ENCODE measurements at regions of chr17 and their contacts with region 1.

Region 1: GRCh38 chr17:7204828-7205461 is 14.7 kb downstream of the DLG4 start:
- DNase-seq: peak; percentile 90 to 99 (median 97)
- ATAC-seq: peak; percentile 90
- H3K4me3 ChIP-seq: peak overlapping the region; percentile 77
- H3K4me3 Mint-ChIP-seq: peak overlapping the region; percentile 67 to 94 (median 85)
- H3K27ac ChIP-seq: peak overlapping the region; percentile 91
- H3K27ac Mint-ChIP-seq: peak overlapping the region; percentile 88 to 99 (median 95)
- H3K4me1 ChIP-seq: peaks cover 15 to 17% of the 10 kb centered on the region in 2 donors
- H3K4me1 Mint-ChIP-seq: peaks cover 28 to 39% (median 32%) of the 10 kb centered on the region in 7 donors
- H3K27me3 ChIP-seq: no peaks in the 10 kb centered on the region
- H3K27me3 Mint-ChIP-seq: no peaks in the 10 kb centered on the region

Region 2: GRCh38 chr17:6995431-6996255 is 209.3 kb before region 1 on chr17 and contains the start of gene ALOX12:
- CTCF ChIA-PET with region 1: no interaction called
- POLR2A ChIA-PET with region 1: no interaction called
- intact Hi-C with region 1: no loop called
- DNase-seq: no peak
- ATAC-seq: peak; percentile 20
- H3K4me3 ChIP-seq: no peak within 1 kb of the TSS
- H3K4me3 Mint-ChIP-seq: peak within 1 kb of the TSS in 1 of 10 donors; percentile 47
- H3K27ac ChIP-seq: no peak within 1 kb of the TSS
- H3K27ac Mint-ChIP-seq: peak within 1 kb of the TSS in 2 of 9 donors; percentile 19 to 25
- H3K4me1 ChIP-seq: no peaks in the 10 kb centered on the region
- H3K4me1 Mint-ChIP-seq: peaks cover 0 to 12% (median 5%) of the 10 kb centered on the region in 7 donors
- H3K27me3 ChIP-seq: no peaks in the 10 kb centered on the region
- H3K27me3 Mint-ChIP-seq: no peaks in the 10 kb centered on the region
- total RNA-seq, gene ALOX12: 1.0 TPM in 1 of 5 experiments, not detected in the others

Region 3: GRCh38 chr17:7234083-7234951 is 29.4 kb after region 1 on chr17 and contains the start of gene DVL2:
- CTCF ChIA-PET with region 1: interaction called, 3 read pairs
- POLR2A ChIA-PET with region 1: interaction called, 3 read pairs
- intact Hi-C with region 1: loop called (anchors 1 kb)
- DNase-seq: peak; percentile 89 to 97 (median 93)
- ATAC-seq: peak; percentile 76
- H3K4me3 ChIP-seq: peak within 1 kb of the TSS; percentile 71
- H3K4me3 Mint-ChIP-seq: peak within 1 kb of the TSS; percentile 87 to 98 (median 96)
- H3K27ac ChIP-seq: peak within 1 kb of the TSS; percentile 84
- H3K27ac Mint-ChIP-seq: peak within 1 kb of the TSS; percentile 72 to 96 (median 93)
- H3K4me1 ChIP-seq: peaks cover 15 to 20% of the 10 kb centered on the region in 2 donors
- H3K4me1 Mint-ChIP-seq: peaks cover 41 to 61% (median 52%) of the 10 kb centered on the region in 7 donors
- H3K27me3 ChIP-seq: no peaks in the 10 kb centered on the region
- H3K27me3 Mint-ChIP-seq: peaks cover 0 to 2% (median 0%) of the 10 kb centered on the region in 5 donors
- total RNA-seq, gene DVL2: 51.2 to 91.5 (median 52.3) TPM

Measured in naive thymus-derived CD4-positive, alpha-beta T cell (primary cell).